ENCODE measurements at regions of chr2 and their contacts with region 1.

Region 1: GRCh38 chr2:65366595-65367125 is 65.7 kb downstream of the SPRED2 start:
- DNase-seq: peak; percentile 97
- H3K4me3 Mint-ChIP-seq: peak overlapping the region; percentile 37
- H3K27ac Mint-ChIP-seq: peak overlapping the region; percentile 73
- H3K4me1 Mint-ChIP-seq: peaks cover 58% of the 10 kb centered on the region
- H3K27me3 Mint-ChIP-seq: no peaks in the 10 kb centered on the region
- CTCF ChIP-seq: no peak

Region 2: GRCh38 chr2:64865073-64865830 is 501.4 kb before region 1 on chr2:
- CTCF ChIA-PET with region 1: no interaction called
- POLR2A ChIA-PET with region 1: no interaction called
- intact Hi-C with region 1: no loop called
- DNase-seq: peak; percentile 68
- H3K4me3 Mint-ChIP-seq: peak overlapping the region; percentile 64
- H3K27ac Mint-ChIP-seq: no peak overlapping the region
- H3K4me1 Mint-ChIP-seq: peaks cover 7% of the 10 kb centered on the region
- H3K27me3 Mint-ChIP-seq: no peaks in the 10 kb centered on the region
- CTCF ChIP-seq: peak; percentile 86

Region 3: DNA sequence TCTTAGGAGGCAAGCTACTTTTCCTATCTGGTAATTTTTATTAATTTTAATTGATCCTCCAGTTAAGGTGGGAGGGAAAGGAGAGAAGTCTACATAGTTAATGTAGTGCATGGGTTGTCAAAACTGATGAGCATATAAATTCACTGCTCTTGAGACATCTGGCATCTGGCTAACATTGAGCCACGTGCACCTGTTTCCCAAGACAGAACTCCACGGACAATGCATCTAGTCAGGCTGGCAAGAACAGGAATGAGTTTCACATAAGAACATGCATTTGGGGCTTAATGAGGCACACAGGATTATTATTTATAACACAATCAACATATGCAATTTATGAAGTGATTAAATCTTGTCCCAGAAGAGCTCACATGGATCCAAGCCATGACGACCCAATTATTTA is 220.6 kb before region 1 on chr2:
- CTCF ChIA-PET with region 1: no interaction called
- POLR2A ChIA-PET with region 1: no interaction called
- intact Hi-C with region 1: no loop called
- DNase-seq: no peak
- H3K4me3 Mint-ChIP-seq: no peak overlapping the region
- H3K27ac Mint-ChIP-seq: no peak overlapping the region
- H3K4me1 Mint-ChIP-seq: no peaks in the 10 kb centered on the region
- H3K27me3 Mint-ChIP-seq: no peaks in the 10 kb centered on the region
- CTCF ChIP-seq: no peak

Region 4: DNA sequence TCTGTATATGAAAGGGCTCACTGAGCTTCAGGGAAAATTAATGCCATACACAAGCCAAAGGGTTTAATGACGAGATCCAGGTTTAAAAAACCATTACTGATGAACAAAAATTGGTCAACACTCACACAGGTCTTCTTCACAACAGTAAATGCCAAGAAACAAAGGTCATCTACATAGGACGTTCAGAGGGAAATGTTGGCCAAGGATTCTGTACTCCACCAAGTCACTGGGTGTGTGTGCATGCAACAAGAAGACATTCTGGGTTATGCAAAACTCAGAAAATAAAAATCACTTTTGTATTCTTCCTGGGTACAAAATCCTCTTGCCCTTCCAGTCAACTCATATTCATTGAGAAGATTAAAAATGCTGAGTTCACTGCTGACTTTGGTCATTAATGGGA is 60.7 kb before region 1 on chr2:
- CTCF ChIA-PET with region 1: no interaction called
- POLR2A ChIA-PET with region 1: no interaction called
- intact Hi-C with region 1: no loop called
- DNase-seq: no peak
- H3K4me3 Mint-ChIP-seq: no peak overlapping the region
- H3K27ac Mint-ChIP-seq: no peak overlapping the region
- H3K4me1 Mint-ChIP-seq: peaks cover 2% of the 10 kb centered on the region
- H3K27me3 Mint-ChIP-seq: no peaks in the 10 kb centered on the region
- CTCF ChIP-seq: no peak

Region 5: DNA sequence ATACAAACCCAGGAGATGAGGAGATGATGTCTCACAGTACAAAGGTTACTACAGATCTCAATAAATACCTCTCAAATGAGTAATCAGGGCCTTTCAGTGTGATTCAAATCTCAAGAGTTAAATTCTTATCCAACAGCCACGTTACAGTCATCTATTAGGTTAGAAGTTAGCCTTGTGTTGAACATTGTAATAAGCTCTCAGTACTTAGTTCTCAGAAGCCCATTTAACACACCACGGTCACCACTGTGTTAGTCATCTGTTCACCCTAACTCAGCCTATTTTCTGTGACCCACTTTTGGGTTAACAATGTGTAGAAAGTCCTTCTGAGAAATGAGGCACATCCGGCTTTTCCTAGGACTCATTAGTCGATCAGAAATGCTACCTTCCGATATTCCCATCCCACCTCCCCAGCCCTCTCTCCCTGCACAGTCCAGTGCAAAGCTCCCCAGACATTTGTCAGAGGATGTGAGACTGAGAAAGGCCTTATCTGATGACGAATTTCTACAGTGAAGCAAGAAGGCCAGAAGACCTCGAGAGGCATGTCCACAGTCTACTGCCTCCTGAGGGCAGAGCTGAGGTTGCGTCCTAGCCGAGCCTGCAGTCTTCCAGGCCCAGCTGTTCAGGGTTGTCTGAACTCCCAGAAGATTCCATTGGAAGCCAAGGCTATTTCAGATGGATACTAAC is 46.5 kb before region 1 on chr2:
- CTCF ChIA-PET with region 1: interaction called, 10 read pairs
- POLR2A ChIA-PET with region 1: interaction called, 50 read pairs
- intact Hi-C with region 1: loop called (anchors 2 kb)
- DNase-seq: peak; percentile 64
- H3K4me3 Mint-ChIP-seq: peak overlapping the region; percentile 32
- H3K27ac Mint-ChIP-seq: peak overlapping the region; percentile 67
- H3K4me1 Mint-ChIP-seq: peaks cover 35% of the 10 kb centered on the region
- H3K27me3 Mint-ChIP-seq: no peaks in the 10 kb centered on the region
- CTCF ChIP-seq: peak; percentile 24

Region 6: DNA sequence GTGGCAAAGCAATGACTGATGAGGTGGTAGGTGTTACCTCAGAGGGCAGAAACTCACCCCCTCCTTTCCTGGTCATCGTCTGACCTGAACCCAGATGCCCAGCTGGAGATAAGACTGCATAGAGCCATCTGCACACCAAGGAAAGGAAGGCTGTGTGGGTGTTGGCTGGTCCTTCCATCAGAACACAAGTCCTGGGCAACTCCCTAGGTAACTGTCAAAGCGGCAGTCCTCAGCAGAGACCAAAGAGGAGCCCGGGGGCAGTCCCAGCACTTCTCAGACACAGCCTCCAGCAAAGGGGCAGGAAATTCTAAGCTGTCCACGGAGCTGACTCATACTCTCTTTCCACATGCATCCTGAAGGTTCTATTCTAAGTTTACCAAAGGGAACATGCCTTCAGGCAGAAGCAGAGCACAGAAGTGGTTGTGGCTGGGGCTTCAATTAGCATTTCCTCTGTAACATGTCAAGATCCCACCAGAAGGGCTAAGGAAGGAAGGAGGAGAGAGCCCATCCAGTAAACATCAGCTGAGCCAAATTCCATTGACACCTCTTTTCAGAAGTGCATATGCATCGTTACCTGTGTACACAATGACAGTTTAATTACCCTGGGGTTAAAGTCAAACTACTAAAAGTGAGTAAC is 11.0 kb after region 1 on chr2:
- CTCF ChIA-PET with region 1: interaction called, 4 read pairs
- POLR2A ChIA-PET with region 1: interaction called, 67 read pairs
- intact Hi-C with region 1: no loop called
- DNase-seq: peak; percentile 90
- H3K4me3 Mint-ChIP-seq: no peak overlapping the region
- H3K27ac Mint-ChIP-seq: no peak overlapping the region
- H3K4me1 Mint-ChIP-seq: peaks cover 33% of the 10 kb centered on the region
- H3K27me3 Mint-ChIP-seq: no peaks in the 10 kb centered on the region
- CTCF ChIP-seq: no peak

Region 7: DNA sequence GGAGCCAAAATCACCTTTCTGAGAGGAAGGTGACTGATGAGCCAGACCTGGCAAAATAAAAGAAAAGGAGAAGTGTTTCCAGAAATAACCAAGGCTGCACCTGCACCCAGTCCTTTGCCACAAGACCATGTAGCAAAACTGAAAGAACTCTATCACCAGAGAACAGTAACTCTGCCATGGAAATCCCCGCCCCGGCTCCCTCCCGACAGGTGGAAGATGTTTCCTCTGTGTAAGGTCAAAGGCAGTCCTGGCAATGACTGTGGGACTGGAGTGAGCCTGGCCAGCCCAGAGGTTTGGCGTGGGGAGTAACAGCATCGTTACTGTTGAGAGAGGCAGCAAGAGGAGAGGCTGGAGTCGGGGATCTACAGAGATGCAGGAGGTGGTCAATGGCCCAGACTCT is 23.5 kb after region 1 on chr2:
- CTCF ChIA-PET with region 1: interaction called, 6 read pairs
- POLR2A ChIA-PET with region 1: interaction called, 51 read pairs
- intact Hi-C with region 1: no loop called
- DNase-seq: no peak
- H3K4me3 Mint-ChIP-seq: no peak overlapping the region
- H3K27ac Mint-ChIP-seq: peak overlapping the region; percentile 70
- H3K4me1 Mint-ChIP-seq: peaks cover 65% of the 10 kb centered on the region
- H3K27me3 Mint-ChIP-seq: no peaks in the 10 kb centered on the region
- CTCF ChIP-seq: no peak

Region 8: DNA sequence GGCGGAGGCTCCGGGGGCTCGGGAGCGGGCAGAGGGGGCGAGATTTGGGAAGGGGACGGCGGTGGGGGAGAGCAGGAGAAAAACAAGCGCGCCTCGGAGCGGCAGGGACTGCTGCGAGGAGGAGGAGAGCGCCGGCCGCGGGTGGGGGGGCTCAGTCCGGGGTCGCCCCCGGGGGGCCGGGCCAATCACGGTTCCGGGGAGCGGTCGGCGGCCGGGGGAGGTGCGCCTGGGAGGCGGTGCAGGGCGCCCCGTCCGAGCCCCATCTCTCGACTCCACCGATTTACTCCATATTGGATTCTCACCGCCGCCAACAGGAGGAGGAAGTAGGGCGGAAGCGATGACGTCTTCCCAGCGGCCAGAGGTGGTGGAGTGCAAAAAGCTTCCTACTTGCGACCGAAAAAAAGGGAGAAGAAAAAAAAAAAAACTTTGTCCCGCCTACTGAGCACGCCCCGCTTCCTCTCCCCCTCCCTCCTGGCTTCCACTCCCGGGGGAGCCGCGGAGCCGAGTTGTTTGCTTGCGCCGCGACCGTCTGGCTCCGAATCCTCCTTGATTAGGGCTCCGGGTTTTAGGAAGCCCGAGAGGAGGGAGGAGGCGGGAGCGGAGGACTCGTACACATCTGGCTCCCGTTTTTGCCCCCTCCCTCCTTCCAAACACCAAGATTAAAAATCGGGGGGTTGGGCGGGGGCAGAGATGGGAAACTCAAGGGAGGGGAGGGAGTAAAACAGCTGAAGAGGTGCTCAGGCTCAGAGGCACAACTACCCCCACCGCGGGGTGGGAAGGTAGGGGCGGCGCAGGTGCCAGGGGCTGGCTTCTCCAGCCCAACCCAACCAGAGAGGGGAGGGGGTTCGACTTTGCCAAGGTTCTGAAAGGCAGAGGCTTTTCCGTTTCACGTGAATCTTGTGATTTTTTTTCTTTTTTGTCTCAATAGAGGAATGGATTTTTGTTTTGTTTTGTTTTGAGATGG is 65.8 kb after region 1 on chr2 and contains the start of gene SPRED2:
- CTCF ChIA-PET with region 1: interaction called, 3 read pairs
- POLR2A ChIA-PET with region 1: interaction called, 28 read pairs
- intact Hi-C with region 1: loop called (anchors 1 kb)
- DNase-seq: peak; percentile 96
- H3K4me3 Mint-ChIP-seq: peak within 1 kb of the TSS; percentile 93
- H3K27ac Mint-ChIP-seq: peak within 1 kb of the TSS; percentile 89
- H3K4me1 Mint-ChIP-seq: peaks cover 5% of the 10 kb centered on the region
- H3K27me3 Mint-ChIP-seq: no peaks in the 10 kb centered on the region
- CTCF ChIP-seq: no peak
- total RNA-seq, gene SPRED2: 38.1 and 38.6 TPM in 2 replicates

Region 9: GRCh38 chr2:65767946-65768345 is 401.3 kb after region 1 on chr2:
- CTCF ChIA-PET with region 1: no interaction called
- POLR2A ChIA-PET with region 1: no interaction called
- intact Hi-C with region 1: no loop called
- DNase-seq: no peak
- H3K4me3 Mint-ChIP-seq: no peak overlapping the region
- H3K27ac Mint-ChIP-seq: no peak overlapping the region
- H3K4me1 Mint-ChIP-seq: no peaks in the 10 kb centered on the region
- H3K27me3 Mint-ChIP-seq: no peaks in the 10 kb centered on the region
- CTCF ChIP-seq: no peak

Measured in MCF 10A (cell line).